ENCODE measurements at regions of chr16 and their contacts with region 1.

Region 1: GRCh38 chr16:63881837-63882236 is 1240.0 kb downstream of the CDH11 start:
- DNase-seq: peak in 1 of 2 experiments; percentile 4
- H3K4me3 ChIP-seq: no peak overlapping the region
- H3K4me3 Mint-ChIP-seq: no peak overlapping the region
- H3K27ac Mint-ChIP-seq: no peak overlapping the region
- H3K4me1 ChIP-seq: no peaks in the 10 kb centered on the region
- H3K4me1 Mint-ChIP-seq: no peaks in the 10 kb centered on the region
- H3K27me3 ChIP-seq: no peaks in the 10 kb centered on the region
- H3K27me3 Mint-ChIP-seq: no peaks in the 10 kb centered on the region
- CTCF ChIP-seq: peak in 1 of 2 experiments; percentile 32

Region 2: GRCh38 chr16:63702984-63703590 is 178.8 kb before region 1 on chr16:
- CTCF ChIA-PET with region 1: no interaction called
- POLR2A ChIA-PET with region 1: no interaction called
- intact Hi-C with region 1: loop called (anchors 1 kb)
- DNase-seq: peak; percentile 48 to 55
- H3K4me3 ChIP-seq: no peak overlapping the region
- H3K4me3 Mint-ChIP-seq: no peak overlapping the region
- H3K27ac Mint-ChIP-seq: no peak overlapping the region
- H3K4me1 ChIP-seq: peaks cover 5% of the 10 kb centered on the region; the same call in 1 of the 2 replicates
- H3K4me1 Mint-ChIP-seq: peaks cover 6% of the 10 kb centered on the region
- H3K27me3 ChIP-seq: no peaks in the 10 kb centered on the region
- H3K27me3 Mint-ChIP-seq: no peaks in the 10 kb centered on the region
- CTCF ChIP-seq: peak in 1 of 2 experiments; percentile 38

Measured in Caco-2 (cell line).